GM23248 (cell line): ENCODE measurements at regions of chr18 and their contacts with region 1.

Region 1: GRCh38 chr18:72762515-72763122 is 105.2 kb downstream of the NETO1 start:
- DNase-seq: peak; percentile 65
- H3K4me3 ChIP-seq: no peak overlapping the region
- H3K27ac ChIP-seq: no peak overlapping the region
- H3K4me1 ChIP-seq: no peaks in the 10 kb centered on the region
- H3K27me3 ChIP-seq: no peaks in the 10 kb centered on the region

Region 2: DNA sequence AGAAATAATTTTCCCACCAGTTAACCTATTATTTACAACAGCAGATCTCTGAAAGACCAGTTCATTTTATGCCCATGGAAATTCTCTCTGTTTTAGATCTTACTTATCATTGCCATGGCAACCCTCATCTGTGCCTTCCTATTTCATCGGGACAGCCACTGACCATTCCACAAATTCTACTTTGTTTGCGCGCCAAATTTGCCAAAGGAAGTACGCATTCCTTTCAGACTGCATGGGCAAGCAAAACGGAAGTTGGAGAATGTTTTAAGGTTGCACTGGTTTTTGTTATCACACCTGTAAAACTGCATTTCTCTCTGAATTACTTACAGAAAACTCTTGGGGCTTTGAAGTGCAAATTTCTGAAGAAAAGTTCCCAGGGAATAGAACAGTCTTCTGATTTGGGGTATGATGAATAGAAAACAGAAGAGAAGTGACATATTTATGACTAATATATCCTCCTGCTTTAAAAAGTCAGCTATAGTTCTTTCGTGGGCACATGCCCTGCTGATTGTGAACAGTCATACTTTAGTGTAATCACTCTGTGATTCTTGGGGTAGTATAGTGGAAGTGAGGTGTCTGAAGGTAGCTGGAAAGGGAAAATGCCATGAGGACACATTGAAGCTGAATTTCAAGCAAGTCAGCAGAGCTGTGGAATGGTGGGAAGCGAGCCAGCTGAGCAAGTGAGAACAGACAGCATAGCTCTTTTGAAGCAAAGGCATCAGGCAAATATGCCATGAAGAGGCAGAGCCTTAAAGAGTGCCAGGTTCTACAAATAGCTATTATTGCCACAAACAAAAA is 84.3 kb after region 1 on chr18:
- in situ Hi-C with region 1: no loop called
- DNase-seq: no peak
- H3K4me3 ChIP-seq: no peak overlapping the region
- H3K27ac ChIP-seq: no peak overlapping the region
- H3K4me1 ChIP-seq: no peaks in the 10 kb centered on the region
- H3K27me3 ChIP-seq: no peaks in the 10 kb centered on the region

Region 3: GRCh38 chr18:74116633-74117554 is 1354.3 kb after region 1 on chr18:
- in situ Hi-C with region 1: loop called (anchors 10 kb)
- DNase-seq: peak; percentile 68
- H3K4me3 ChIP-seq: no peak overlapping the region
- H3K27ac ChIP-seq: no peak overlapping the region
- H3K4me1 ChIP-seq: 0 out of 2 replicates have a peak, but pooled peaks cover 11% of the 10 kb centered on the region
- H3K27me3 ChIP-seq: 0 out of 2 replicates have a peak, but pooled peaks cover 7% of the 10 kb centered on the region